Activated CD8-positive, alpha-beta T cell treated with anti-CD3 and anti-CD28 coated beads for 36 hours (primary cell): ENCODE measurements at regions of chr12 and their contacts with region 1.

Region 1: DNA sequence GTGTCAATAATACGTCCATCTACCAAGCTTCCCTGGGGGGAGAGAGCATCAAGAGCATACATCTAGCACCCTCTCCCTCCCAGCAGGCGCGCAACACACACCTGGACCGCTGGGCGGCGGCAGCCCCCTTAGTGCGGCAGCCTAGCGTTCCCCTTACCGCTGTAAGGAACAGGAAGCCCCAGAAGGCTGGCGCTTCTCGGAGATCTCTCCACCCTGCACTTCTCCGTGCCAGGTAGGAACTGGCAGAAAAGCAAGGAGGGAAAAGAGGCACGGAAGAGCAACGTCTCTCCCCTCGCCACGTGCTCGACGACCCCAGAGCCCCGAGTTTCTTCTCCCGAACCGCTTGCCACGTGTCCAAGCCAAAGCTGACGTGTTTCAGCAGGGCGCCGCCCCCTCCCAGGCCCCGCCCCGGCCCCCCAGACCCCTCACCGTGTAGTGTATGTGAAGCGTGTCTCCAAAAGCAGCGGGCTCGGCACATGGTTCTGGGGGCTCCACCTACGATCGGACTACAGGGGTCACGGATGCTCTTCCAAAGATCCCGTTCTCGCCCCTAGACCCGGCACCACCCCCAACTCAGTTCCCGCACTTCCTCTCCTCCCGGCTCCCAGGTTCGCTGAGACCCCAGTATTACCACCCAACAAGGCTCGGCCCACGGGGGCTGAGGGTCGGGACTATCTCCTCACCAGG is 532 bp downstream of the FKBP11 start:
- DNase-seq: peak; percentile 87
- ATAC-seq: peak; percentile 76
- H3K4me3 Mint-ChIP-seq: peak overlapping the region; percentile 88
- H3K27ac Mint-ChIP-seq: peak overlapping the region; percentile 96
- H3K4me1 Mint-ChIP-seq: peaks cover 48% of the 10 kb centered on the region
- H3K27me3 Mint-ChIP-seq: no peaks in the 10 kb centered on the region
- CTCF ChIP-seq: peak; percentile 85

Region 2: GRCh38 chr12:48865434-48866290 is 59.1 kb before region 1 on chr12 and contains the start of gene RND1:
- CTCF ChIA-PET with region 1: interaction called, 6 read pairs
- POLR2A ChIA-PET with region 1: interaction called, 22 read pairs
- intact Hi-C with region 1: no loop called
- DNase-seq: peak; percentile 91
- ATAC-seq: peak; percentile 94
- H3K4me3 Mint-ChIP-seq: peak within 1 kb of the TSS; percentile 84
- H3K27ac Mint-ChIP-seq: peak within 1 kb of the TSS; percentile 79
- H3K4me1 Mint-ChIP-seq: peaks cover 21% of the 10 kb centered on the region
- H3K27me3 Mint-ChIP-seq: peaks cover 24% of the 10 kb centered on the region
- CTCF ChIP-seq: no peak
- total RNA-seq, gene RND1: 2.3 to 3.2 TPM

Region 3: GRCh38 chr12:48903982-48904411 is 20.8 kb before region 1 on chr12:
- CTCF ChIA-PET with region 1: interaction called, 18 read pairs
- POLR2A ChIA-PET with region 1: interaction called, 4 read pairs
- intact Hi-C with region 1: no loop called
- DNase-seq: peak; percentile 91
- ATAC-seq: peak; percentile 98
- H3K4me3 Mint-ChIP-seq: peak overlapping the region; percentile 58
- H3K27ac Mint-ChIP-seq: no peak overlapping the region
- H3K4me1 Mint-ChIP-seq: peaks cover 7% of the 10 kb centered on the region
- H3K27me3 Mint-ChIP-seq: no peaks in the 10 kb centered on the region
- CTCF ChIP-seq: peak; percentile 79

Region 4: GRCh38 chr12:48910196-48910595 is 14.6 kb before region 1 on chr12:
- CTCF ChIA-PET with region 1: interaction called, 43 read pairs
- POLR2A ChIA-PET with region 1: interaction called, 39 read pairs
- intact Hi-C with region 1: no loop called
- DNase-seq: no peak
- ATAC-seq: no peak
- H3K4me3 Mint-ChIP-seq: no peak overlapping the region
- H3K27ac Mint-ChIP-seq: no peak overlapping the region
- H3K4me1 Mint-ChIP-seq: no peaks in the 10 kb centered on the region
- H3K27me3 Mint-ChIP-seq: no peaks in the 10 kb centered on the region
- CTCF ChIP-seq: no peak

Region 5: GRCh38 chr12:48936379-48936979 is 11.7 kb after region 1 on chr12:
- CTCF ChIA-PET with region 1: interaction called, 87 read pairs
- POLR2A ChIA-PET with region 1: interaction called, 7 read pairs
- intact Hi-C with region 1: no loop called
- DNase-seq: peak; percentile 92
- ATAC-seq: peak; percentile 79
- H3K4me3 Mint-ChIP-seq: no peak overlapping the region
- H3K27ac Mint-ChIP-seq: no peak overlapping the region
- H3K4me1 Mint-ChIP-seq: peaks cover 24% of the 10 kb centered on the region
- H3K27me3 Mint-ChIP-seq: no peaks in the 10 kb centered on the region
- CTCF ChIP-seq: peak; percentile 86

Region 6: DNA sequence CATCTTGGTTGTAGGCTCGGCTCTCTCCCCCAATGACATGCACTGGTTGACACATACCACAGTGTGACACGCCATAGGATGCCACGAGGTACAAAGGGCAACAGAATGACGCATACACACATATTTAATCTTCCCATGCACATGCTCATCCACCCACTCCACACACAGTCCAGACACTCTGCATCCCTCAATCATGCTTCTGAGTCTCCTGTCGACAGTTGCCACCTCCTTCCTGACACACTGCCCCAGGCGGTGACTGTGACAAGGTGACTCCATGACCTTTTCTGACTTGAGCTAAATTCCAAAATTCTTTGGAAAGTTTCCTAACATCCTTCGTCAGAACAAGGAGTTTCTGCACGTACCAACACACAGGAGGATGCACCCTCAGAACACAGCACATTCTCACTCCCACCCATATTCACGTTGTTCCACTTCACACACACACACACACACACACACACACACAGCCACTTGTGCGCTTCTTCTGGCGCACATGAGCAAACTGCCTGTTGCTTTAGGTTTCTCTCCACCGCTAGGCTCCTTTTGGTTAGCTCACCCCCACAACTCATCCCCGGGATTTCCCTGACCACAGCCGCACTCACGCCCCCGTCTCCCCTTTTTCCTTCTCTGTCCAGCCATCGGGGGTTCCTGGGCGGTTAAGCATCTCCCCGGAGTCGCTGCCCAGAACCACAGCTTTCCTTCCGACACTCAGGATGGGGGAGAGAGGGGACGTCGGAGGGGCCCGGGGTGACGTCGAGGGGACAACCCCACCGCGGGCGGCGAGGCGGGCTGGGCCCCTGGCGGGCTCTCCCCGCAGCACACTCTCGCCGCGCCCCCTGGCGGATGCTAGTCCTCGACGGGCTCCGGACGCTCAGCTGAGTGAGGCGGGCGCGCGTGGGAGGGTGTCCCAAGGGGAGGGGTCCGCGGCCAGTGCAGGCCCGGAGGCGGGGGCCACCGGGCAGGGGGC is 52.8 kb after region 1 on chr12:
- CTCF ChIA-PET with region 1: interaction called, 16 read pairs
- POLR2A ChIA-PET with region 1: interaction called, 27 read pairs
- intact Hi-C with region 1: no loop called
- DNase-seq: peak; percentile 88
- ATAC-seq: peak; percentile 60
- H3K4me3 Mint-ChIP-seq: peak overlapping the region; percentile 3
- H3K27ac Mint-ChIP-seq: peak overlapping the region; percentile 51
- H3K4me1 Mint-ChIP-seq: peaks cover 52% of the 10 kb centered on the region
- H3K27me3 Mint-ChIP-seq: peaks cover 63% of the 10 kb centered on the region
- CTCF ChIP-seq: peak; percentile 97